ENCODE measurements at regions of chr5 and their contacts with region 1.

Region 1: GRCh38 chr5:5252111-5252510 is 112.0 kb downstream of the ADAMTS16 start:
- DNase-seq: no peak
- H3K4me3 ChIP-seq: no peak overlapping the region
- H3K27ac ChIP-seq: no peak overlapping the region
- H3K4me1 ChIP-seq: no peaks in the 10 kb centered on the region
- H3K27me3 ChIP-seq: no peaks in the 10 kb centered on the region
- CTCF ChIP-seq: no peak
- POLR2A ChIP-seq: no peak

Region 2: GRCh38 chr5:5217371-5217770 is 34.7 kb before region 1 on chr5:
- intact Hi-C with region 1: loop called (anchors 5 kb)
- DNase-seq: no peak
- H3K4me3 ChIP-seq: no peak overlapping the region
- H3K27ac ChIP-seq: no peak overlapping the region
- H3K4me1 ChIP-seq: no peaks in the 10 kb centered on the region
- H3K27me3 ChIP-seq: no peaks in the 10 kb centered on the region
- CTCF ChIP-seq: no peak
- POLR2A ChIP-seq: no peak

Region 3: GRCh38 chr5:6837519-6838110 is 1585.5 kb after region 1 on chr5:
- intact Hi-C with region 1: no loop called
- DNase-seq: no peak
- H3K4me3 ChIP-seq: no peak overlapping the region
- H3K27ac ChIP-seq: no peak overlapping the region
- H3K4me1 ChIP-seq: no peaks in the 10 kb centered on the region
- H3K27me3 ChIP-seq: no peaks in the 10 kb centered on the region
- CTCF ChIP-seq: peak in 1 of 3 donors; percentile 14
- POLR2A ChIP-seq: no peak